ENCODE measurements at regions of chr12 and their contacts with region 1.

Region 1: DNA sequence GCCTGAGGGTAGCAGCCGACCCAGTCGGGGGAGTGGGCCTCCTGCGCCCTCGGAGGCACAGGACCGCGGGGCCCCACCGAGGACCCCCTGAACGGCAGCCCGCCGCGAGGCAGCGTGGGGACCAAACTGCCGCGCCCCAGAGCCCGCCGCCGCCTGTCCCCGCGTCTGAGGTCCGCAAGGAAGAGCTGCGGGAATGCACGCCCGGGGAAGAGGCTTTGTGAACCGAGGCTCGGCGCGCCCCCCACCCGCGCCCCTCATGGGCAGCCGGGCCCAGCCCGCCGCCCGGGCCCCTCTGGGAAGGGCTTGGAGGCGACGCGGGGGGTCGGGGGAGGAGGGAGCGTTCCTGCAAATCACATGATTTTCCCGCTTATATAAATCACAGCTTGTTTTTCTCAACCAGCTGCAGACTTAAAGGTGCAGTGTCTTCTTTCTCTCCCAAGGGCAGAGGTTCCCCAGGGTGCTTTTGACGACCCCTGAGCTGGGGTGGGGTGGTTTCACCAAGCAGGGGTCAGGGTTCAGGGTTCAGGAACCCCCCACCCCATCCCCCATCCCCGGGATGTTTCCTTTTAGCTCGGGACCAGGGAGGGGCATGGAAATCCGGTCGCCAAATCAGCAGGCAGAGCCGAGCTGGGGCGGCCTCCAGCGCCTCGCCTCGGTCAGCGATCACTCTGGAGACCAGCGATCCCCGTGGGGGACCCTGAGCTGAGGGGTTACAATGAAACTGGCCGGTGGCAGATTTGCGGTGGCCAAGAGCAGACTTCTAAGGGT is 44.7 kb upstream of the ATP23 start:
- DNase-seq: peak; percentile 69 to 98 (median 82)

Region 2: GRCh38 chr12:57836442-57837375 is 59.9 kb before region 1 on chr12:
- intact Hi-C with region 1: loop called (anchors 1 kb)
- DNase-seq: peak in 4 of 10 donors; percentile 41 to 90 (median 42)

Region 3: DNA sequence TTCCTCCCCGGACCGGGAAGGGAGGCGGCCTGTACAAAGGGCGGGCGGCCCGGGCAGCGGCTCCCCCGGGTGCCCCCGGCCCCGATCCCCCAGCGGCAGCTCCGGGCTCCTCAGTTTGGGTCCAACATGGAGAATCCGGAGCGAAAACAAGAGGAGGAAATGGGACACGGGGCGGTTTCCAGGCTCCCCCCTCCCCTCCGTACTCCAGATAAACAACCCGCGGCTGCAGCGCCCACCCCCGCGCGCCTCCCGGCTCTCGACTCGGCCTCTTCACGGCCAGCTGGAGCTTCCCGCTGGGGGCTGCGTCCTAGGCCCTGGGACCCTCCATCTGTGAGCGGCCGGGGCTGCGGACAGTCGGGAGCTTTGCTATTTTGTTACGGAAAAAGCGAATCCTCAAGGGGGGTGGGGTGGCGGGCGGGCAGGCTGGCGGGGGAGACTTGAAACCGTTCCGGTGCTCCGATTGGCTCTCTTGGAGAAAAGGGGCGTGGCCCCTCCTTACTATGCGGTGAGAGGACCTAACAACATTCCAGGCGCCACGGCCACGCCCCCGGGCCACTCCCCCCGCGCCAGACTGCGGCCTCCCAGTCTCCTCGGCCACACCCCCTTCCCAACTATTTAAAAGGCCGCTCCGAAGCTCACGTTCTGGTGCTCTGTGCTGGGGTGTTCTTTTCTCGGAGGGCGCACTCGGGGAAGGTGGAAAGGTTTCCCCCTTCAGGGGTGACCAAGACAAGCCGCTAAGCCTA is 49.9 kb before region 1 on chr12 and contains the start of gene CTDSP2:
- intact Hi-C with region 1: loop called (anchors 5 kb)
- DNase-seq: peak; percentile 99 to 100 (median 100)

Measured in posterior cingulate gyrus (tissue), 11 donors.